Adrenal gland (tissue), 19 donors: ENCODE measurements at regions of chr5 and their contacts with region 1.

Region 1: GRCh38 chr5:97229190-97229589 is 46.1 kb upstream of the RIOK2 start:
- DNase-seq: no peak
- H3K4me3 ChIP-seq: no peak overlapping the region
- H3K27ac ChIP-seq: no peak overlapping the region
- H3K4me1 ChIP-seq: peaks cover 0 to 4% of the 10 kb centered on the region in 2 donors
- H3K27me3 ChIP-seq: no peaks in the 10 kb centered on the region
- CTCF ChIP-seq: no peak
- POLR2A ChIP-seq: no peak

Region 2: DNA sequence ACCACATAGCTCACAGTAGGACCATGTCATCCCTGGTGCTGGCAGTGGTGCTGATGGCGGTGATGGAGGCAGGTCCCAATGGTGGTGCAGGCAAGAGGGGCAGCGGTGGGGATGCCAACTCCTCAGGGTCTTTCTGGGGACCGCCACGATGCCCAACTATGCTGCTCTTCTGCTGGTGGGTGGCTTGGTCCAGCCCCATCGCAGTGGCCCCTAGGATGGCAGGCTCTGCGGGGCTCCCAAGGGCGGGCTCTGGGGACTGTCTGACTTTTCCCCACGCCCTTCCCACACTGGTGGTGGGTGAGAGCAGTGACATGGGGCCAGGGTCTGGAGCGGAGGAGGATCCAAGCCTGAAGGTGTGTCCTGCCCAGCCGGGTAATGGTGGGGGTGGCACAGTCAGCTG is 242.8 kb after region 1 on chr5:
- intact Hi-C with region 1: no loop called
- DNase-seq: no peak
- H3K4me3 ChIP-seq: no peak overlapping the region
- H3K27ac ChIP-seq: no peak overlapping the region
- H3K4me1 ChIP-seq: no peaks in the 10 kb centered on the region
- H3K27me3 ChIP-seq: no peaks in the 10 kb centered on the region
- CTCF ChIP-seq: no peak
- POLR2A ChIP-seq: no peak

Region 3: GRCh38 chr5:97534166-97534565 is 305.0 kb after region 1 on chr5:
- intact Hi-C with region 1: loop called in 1 of 2 experiments (anchors 5 kb)
- DNase-seq: peak in 5 of 7 donors; percentile 15 to 39 (median 19)
- H3K4me3 ChIP-seq: no peak overlapping the region
- H3K27ac ChIP-seq: no peak overlapping the region
- H3K4me1 ChIP-seq: no peaks in the 10 kb centered on the region
- H3K27me3 ChIP-seq: no peaks in the 10 kb centered on the region
- CTCF ChIP-seq: peak; percentile 38 to 55 (median 49)
- POLR2A ChIP-seq: no peak